ENCODE measurements at regions of chr11 and their contacts with region 1.

Region 1: DNA sequence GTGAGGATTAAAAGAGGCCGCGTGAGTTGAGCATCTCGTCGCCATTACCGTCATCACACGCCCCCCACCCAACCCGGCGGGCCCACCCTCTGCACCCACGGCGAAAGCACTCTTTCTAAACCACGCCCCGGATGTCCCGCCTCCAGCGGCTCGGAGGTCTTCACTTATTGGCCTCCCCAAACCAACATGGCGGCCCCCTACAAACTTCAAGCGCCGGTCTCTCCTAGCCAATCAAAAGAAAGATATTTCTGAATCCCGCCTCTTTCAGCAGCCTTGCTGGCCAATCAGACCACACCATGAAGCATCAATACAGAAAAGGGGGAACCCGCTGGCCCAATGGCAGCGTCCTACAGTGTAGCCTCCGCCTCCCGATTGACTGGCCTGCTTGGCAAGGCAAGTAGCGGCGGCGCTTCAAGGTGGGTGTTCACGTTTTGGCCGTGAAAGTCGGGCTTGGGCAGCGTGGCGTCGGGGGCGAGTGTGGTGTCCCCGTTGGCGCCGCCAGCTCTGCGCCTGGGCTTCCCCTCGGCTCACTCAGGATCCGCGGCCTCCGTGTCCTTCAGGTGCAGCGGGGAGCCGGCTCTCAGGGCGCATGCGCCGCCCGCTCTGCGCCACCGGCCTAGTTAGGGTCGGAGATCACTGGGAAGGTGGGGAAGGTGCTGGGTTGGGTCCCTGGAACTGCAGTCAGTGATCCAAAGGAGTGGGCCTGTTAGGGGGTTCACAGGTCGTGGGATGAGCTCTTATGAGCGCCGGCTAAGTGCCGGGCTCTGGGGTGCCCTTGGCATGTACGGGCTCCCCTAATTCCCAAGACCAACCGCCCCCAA is at the start of gene NDUFS8:
- DNase-seq: peak; percentile 98
- ATAC-seq: peak; percentile 94
- total RNA-seq, gene NDUFS8: 304 to 342 TPM

Region 2: DNA sequence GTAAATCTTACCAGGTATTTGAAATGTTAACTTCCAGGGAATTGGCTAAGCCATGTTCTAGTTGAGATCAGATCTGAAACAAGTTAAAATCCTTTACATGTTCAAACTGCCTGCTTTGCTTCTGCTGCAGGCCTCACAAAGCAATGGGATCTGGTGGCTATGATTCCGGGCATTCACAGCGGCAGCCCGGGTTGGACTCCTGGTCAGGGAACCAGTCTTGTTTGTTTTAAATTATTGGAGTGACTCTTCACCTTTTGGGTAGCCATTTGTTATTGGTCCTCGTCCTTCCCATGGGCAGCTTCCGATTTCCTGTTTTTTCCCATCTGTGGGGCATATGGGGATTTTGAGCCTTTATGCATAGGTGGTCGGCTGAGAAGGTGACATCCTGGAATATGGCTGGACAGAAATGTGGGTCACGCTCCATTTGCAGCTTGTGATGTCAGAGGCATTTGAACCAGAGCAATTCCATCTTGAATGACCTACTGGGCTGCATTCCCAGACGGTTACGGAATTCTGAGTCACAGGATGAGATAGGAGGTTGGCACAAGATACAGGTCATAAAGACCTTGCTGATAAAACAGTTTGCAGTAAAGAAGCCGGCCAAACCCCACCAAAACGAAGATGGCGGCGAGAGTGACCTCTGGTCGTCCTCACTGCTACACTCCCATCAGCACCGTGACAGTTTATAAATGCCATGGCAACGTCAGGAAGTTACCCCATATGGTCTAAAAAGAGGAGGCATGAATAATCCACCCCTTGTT is 467.0 kb before region 1 on chr11:
- intact Hi-C with region 1: no loop called
- DNase-seq: peak; percentile 81
- ATAC-seq: peak; percentile 82 to 89

Region 3: GRCh38 chr11:68121067-68121899 is 90.8 kb after region 1 on chr11 and contains the start of gene CHKA:
- intact Hi-C with region 1: loop called in 1 of 2 experiments (anchors 10 kb)
- DNase-seq: peak; percentile 94
- ATAC-seq: peak; percentile 97 to 98
- total RNA-seq, gene CHKA: 7.8 to 11.8 TPM

Region 4: DNA sequence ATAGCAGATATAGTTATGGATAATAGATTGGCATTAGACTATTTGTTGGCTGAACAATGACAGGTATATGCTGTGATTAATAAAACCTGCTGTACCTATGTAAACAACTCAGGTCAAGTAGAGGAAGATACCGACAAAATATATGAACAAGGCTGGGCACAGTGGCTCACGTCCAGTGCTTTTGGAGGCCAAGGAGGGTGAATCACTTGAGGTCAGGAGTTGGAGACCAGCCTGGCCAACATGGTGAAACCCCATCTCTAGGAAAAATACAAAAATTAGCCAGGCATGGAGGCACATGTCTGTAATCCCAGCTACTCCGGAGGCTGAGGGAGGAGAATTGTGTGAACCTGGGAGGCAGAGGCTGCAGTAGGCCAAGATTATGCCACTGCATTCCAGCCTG is 104.6 kb after region 1 on chr11:
- intact Hi-C with region 1: no loop called
- DNase-seq: no peak
- ATAC-seq: no peak

Region 5: DNA sequence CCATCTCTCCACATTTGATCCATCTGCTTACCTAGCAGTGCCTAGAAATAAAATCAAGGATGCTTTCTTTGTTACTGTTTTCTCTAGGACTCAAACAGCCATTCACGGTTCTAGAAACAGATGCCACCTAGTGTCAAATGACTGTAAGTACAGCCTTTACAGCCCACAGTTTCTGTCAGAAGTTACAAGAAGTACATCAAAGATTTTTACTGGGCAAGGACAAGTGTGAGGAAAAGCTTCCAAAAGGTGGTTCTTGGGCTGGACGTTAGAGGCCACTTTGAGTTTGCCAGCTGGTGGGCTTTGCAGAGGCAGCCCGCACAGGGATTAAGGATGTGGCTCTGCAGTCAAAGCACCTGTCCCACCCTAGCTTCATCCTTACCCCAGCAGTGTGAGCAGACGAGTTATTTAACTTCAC is 175.7 kb after region 1 on chr11:
- intact Hi-C with region 1: loop called in 1 of 2 experiments (anchors 10 kb)
- DNase-seq: no peak
- ATAC-seq: peak in 1 of 2 donors; percentile 29

Measured in left cardiac atrium (tissue), 4 donors.